Ascending aorta (tissue), 2 donors: ENCODE measurements at regions of chr1 and their contacts with region 1.

Region 1: GRCh38 chr1:29033829-29034466 is 89.8 kb downstream of the TMEM200B start:
- DNase-seq: no peak
- H3K4me3 ChIP-seq: no peak overlapping the region
- H3K27ac ChIP-seq: no peak overlapping the region
- H3K4me1 ChIP-seq: no peaks in the 10 kb centered on the region
- H3K27me3 ChIP-seq: no peaks in the 10 kb centered on the region
- CTCF ChIP-seq: peak; percentile 45 to 65 (median 49)

Region 2: DNA sequence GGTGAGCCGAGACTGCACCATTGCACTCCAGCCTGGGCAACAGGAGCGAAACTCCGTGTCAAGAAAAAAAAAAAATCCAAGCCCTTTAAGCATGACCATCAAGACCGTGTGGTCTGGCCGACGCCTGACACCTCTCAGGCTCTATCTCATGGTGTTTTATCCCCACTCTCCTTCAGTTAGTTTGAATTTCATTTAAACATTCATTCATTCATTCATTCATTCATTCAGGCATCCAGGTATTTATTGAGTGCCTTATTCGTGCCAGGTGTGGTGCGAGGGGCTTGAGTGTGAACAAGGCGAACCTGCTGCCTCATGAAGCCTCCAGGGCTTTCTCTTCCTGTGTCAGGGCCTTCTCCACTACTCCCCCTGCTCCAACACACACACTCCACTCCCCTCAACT is 244.5 kb before region 1 on chr1:
- intact Hi-C with region 1: loop called (anchors 5 kb)
- DNase-seq: no peak
- H3K4me3 ChIP-seq: no peak overlapping the region
- H3K27ac ChIP-seq: no peak overlapping the region
- H3K4me1 ChIP-seq: peaks cover 0 to 3% of the 10 kb centered on the region in 2 donors
- H3K27me3 ChIP-seq: no peaks in the 10 kb centered on the region
- CTCF ChIP-seq: no peak